ENCODE measurements at regions of chr1 and their contacts with region 1.

Region 1: DNA sequence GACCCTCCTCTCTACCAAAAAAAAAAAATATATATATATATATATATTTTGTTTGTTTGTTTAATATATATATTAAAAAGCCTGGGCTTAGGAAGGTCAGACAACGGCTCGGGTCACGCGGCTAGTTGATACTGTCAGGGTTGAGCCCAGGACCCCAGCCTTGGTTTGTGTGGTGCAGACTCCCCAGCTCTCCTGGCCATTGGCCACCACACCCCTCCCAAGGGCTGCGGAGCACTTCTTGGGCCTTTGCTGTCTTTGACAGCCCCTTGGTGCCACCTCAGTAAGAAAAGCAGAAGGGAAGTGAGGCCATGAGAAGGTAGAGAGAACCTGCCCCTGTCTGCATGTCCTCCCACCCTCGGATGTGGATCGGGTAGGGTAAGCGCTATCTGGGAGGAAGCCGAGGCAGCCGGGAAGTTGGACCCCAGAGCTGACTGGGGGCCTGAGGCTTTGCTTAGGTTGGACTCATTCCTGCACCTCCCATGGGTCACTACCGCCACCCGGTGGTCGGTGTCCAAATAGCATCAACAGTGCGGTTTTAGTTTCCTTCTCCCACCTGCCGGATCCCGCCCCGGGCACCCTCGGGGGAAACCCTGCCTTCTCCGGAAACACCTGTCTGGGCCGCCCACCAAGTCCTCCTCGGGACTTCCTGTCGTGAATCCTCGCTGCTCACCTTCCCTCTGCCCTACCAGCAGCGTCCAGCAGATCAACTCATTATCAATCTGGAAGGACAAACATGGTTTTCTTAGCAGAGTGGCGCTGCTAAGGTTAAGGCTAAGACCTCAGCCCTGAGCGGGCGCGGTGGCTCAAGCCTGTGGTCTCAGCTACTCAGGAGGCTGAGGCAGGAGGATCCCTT is 29.8 kb upstream of the GNPAT start:
- DNase-seq: peak; percentile 64 to 84 (median 69)
- ATAC-seq: peak; percentile 50 to 89 (median 80)
- H3K4me3 ChIP-seq: peak overlapping the region in 9 of 12 donors; percentile 26 to 56 (median 48)
- H3K27ac ChIP-seq: no peak overlapping the region
- H3K4me1 ChIP-seq: peaks cover 0 to 9% (median 0%) of the 10 kb centered on the region in 12 donors
- H3K27me3 ChIP-seq: peaks cover 0 to 18% (median 0%) of the 10 kb centered on the region in 9 donors
- CTCF ChIP-seq: peak; percentile 86 to 97 (median 93)
- POLR2A ChIP-seq: no peak

Region 2: DNA sequence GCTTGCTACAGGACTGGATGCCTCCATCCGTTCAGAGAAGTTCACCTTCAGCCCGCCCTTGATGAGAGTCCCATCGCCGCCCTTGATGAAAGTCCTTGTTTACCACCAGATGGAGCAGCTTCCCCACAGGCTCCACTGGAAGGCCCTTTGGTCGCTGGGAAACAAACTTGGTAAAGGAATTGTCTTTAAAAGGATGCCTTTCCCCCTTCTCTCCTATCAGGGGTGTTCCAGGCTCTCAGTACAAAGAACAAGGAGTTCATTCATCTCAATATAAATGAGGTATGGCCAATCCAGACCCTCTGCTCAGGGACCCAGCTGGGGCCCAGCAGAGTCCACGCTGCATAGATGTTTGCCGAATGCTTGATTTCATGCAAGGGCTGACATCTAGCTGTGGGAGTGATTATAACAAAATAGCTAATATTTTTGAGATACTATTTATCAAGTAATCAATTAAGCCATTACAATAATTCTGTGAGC is 413.3 kb before region 1 on chr1:
- intact Hi-C with region 1: loop called (anchors 1 to 5 kb)
- DNase-seq: peak in 4 of 5 donors; percentile 64 to 78 (median 67)
- ATAC-seq: peak; percentile 83 to 95 (median 90)
- H3K4me3 ChIP-seq: peak overlapping the region in 1 of 12 donors; percentile 12
- H3K27ac ChIP-seq: no peak overlapping the region
- H3K4me1 ChIP-seq: no peaks in the 10 kb centered on the region
- H3K27me3 ChIP-seq: no peaks in the 10 kb centered on the region
- CTCF ChIP-seq: peak; percentile 39 to 87 (median 79)
- POLR2A ChIP-seq: no peak

Region 3: DNA sequence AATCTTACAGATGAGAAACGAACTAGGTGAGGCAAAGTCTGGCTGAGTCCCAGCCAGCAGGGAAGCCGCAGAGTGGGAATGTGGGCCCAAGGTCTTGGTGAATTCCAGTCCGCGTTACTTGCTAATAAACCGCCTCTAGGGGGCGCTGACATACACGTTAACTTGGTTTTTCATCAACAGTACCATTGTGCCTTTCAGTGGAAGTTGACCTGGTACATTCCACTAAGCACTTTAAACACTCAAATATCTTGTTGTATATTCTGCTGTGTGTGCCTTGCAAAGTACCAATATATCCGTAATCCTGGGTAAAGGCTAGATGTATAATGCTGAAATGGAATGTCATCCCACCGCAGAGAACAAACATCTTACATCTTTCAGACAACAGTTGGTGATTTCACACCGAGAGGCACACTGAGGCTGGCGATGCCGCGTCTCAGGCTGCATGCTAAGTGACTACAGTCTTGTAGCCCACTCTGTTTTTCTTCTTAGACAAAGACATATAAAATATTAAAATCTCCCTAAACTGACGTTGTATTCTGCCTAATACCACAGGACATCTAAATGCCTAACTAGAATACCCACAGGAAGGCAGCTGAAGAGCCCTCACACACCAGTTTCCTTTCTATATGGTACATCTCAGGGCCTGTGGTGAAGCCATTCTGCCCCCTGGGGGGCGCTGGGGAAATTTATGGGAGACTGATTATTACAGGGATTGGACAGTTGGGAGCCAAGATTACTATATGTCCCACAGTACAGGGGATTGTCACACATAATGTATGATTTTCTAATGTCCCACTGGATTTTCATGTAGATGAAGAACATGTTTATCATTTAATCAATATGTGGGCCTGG is 293.7 kb before region 1 on chr1:
- intact Hi-C with region 1: loop called (anchors 1 to 5 kb)
- DNase-seq: peak; percentile 57 to 80 (median 63)
- ATAC-seq: peak; percentile 59 to 90 (median 79)
- H3K4me3 ChIP-seq: no peak overlapping the region
- H3K27ac ChIP-seq: no peak overlapping the region
- H3K4me1 ChIP-seq: no peaks in the 10 kb centered on the region
- H3K27me3 ChIP-seq: no peaks in the 10 kb centered on the region
- CTCF ChIP-seq: peak; percentile 43 to 79 (median 62)
- POLR2A ChIP-seq: no peak

Region 4: DNA sequence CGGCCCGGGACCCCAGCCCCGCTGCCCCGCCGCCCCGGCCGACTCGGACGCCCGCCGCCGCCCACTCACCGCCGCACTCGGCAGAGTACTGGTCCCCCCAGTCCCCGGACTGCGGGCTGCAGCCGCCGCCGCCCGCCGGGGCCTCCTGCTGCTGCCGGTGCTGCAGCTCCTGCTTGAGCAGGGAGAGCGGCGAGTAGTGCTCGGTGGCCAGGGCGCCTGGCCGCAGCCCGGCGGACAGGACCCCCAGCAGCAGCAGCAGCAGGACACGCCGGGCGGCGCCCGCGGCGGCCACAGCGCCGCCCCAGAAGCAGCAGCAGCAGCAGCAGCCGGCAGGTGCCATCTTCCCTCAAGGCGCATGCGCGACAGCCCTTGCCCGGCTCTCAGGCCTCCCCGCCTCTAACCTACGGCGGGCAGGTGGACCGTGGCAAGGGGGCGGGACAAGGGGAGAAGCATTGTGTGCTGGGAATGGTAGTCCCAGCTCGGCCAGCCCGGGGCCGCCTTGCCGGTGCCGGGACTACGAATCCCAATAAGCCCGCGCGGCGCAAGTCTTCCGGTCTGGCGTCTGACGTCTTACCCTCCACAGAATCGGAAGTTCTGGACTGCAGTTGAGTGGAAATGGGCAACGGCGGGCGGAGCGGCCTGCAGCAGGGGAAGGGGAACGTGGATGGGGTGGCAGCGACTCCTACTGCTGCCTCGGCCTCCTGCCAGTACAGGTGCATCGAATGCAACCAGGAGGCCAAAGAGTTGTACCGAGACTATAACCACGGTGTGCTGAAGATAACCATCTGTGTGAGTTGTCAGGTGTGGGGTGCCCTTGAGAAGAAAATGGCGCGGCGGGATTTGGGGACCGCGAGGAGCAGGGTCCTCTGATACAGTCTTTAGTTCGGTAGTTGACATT is 232.5 kb before region 1 on chr1 and contains the starts of genes ARV1 and TTC13:
- intact Hi-C with region 1: loop called in 1 of 10 experiments (anchors 1 kb)
- DNase-seq: peak; percentile 98 to 100 (median 99)
- ATAC-seq: peak; percentile 100
- H3K4me3 ChIP-seq: peak within 1 kb of the TSS; percentile 40 to 92 (median 80)
- H3K27ac ChIP-seq: peak within 1 kb of the TSS; percentile 75 to 88 (median 80)
- H3K4me1 ChIP-seq: peaks cover 0 to 41% (median 20%) of the 10 kb centered on the region in 12 donors
- H3K27me3 ChIP-seq: no peaks in the 10 kb centered on the region
- CTCF ChIP-seq: peak in 7 of 12 donors; percentile 19 to 48 (median 28)
- POLR2A ChIP-seq: peak in 1 of 2 donors; percentile 79
- total RNA-seq, gene ARV1: 16.3 to 24.8 (median 22.0) TPM
- total RNA-seq, gene TTC13: 5.8 to 9.6 (median 6.9) TPM

Region 5: GRCh38 chr1:231020139-231020601 is 191.1 kb before region 1 on chr1:
- intact Hi-C with region 1: loop called in 1 of 10 experiments (anchors 10 kb)
- DNase-seq: no peak
- ATAC-seq: peak in 3 of 4 donors; percentile 35 to 72 (median 49)
- H3K4me3 ChIP-seq: peak overlapping the region in 1 of 12 donors; percentile 6
- H3K27ac ChIP-seq: peak overlapping the region in 9 of 12 donors; percentile 11 to 82 (median 39)
- H3K4me1 ChIP-seq: peaks cover 0 to 22% (median 6%) of the 10 kb centered on the region in 12 donors
- H3K27me3 ChIP-seq: no peaks in the 10 kb centered on the region
- CTCF ChIP-seq: no peak
- POLR2A ChIP-seq: no peak

Region 6: DNA sequence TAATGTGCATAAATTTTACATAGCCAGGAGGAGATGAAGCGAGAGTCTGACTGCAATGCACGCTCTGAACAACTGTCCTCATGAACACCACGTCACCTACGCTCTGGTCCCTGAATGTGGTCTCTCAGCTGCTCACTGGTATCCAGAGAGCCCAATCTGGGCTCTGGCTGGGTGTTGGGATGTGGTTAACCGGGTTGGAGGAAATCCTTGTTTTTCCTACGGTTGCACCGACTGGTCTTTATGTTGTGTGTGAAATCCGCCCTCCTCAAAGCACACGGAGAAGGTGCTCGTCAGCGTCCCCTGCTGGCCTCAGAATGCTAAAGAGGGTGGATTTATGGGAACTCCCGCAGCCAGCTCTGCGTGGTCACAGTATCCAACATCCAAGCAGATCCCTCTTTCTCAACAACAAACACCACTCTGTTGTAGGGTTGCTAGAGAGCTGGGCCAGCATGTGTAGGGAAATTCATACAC is 119.4 kb before region 1 on chr1:
- intact Hi-C with region 1: loop called in 4 of 10 experiments (anchors 5 to 10 kb)
- DNase-seq: no peak
- ATAC-seq: no peak
- H3K4me3 ChIP-seq: no peak overlapping the region
- H3K27ac ChIP-seq: no peak overlapping the region
- H3K4me1 ChIP-seq: peaks cover 0 to 12% (median 4%) of the 10 kb centered on the region in 12 donors
- H3K27me3 ChIP-seq: peaks cover 0 to 2% (median 0%) of the 10 kb centered on the region in 9 donors
- CTCF ChIP-seq: peak in 11 of 12 donors; percentile 9 to 53 (median 33)
- POLR2A ChIP-seq: no peak

Region 7: DNA sequence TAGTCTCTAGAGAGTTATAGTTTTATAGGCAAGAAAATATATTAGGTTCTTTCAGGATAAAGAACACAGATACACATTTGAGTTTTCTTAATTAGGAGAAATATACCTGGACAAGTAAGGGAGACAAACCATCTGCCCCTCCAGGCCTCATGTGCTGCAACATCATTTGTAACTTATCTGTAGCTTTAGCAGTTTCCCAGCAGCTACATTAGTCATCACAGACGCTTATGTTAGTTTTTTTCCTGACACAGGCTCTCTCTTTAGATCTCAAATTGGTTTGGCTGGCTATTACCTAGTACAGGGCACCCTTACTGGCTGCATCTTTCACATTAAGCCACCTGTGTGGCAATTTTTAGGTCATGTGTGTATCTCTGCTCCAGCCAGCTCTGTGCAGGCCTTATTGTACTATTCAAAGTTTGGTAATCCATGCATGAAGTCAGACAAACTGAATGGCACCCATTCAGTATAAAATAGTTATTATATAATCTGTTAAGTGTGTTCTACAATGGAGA is 55.6 kb after region 1 on chr1:
- intact Hi-C with region 1: no loop called
- DNase-seq: no peak
- ATAC-seq: no peak
- H3K4me3 ChIP-seq: no peak overlapping the region
- H3K27ac ChIP-seq: no peak overlapping the region
- H3K4me1 ChIP-seq: no peaks in the 10 kb centered on the region
- H3K27me3 ChIP-seq: no peaks in the 10 kb centered on the region
- CTCF ChIP-seq: no peak
- POLR2A ChIP-seq: no peak